Activated CD4-positive, alpha-beta memory T cell treated with anti-CD3 and anti-CD28 coated beads for 36 hours (primary cell): ENCODE measurements at regions of chr4 and their contacts with region 1.

Region 1: GRCh38 chr4:175536852-175537453 is 275.1 kb downstream of the GPM6A start:
- DNase-seq: no peak
- H3K4me3 Mint-ChIP-seq: no peak overlapping the region
- H3K27ac Mint-ChIP-seq: no peak overlapping the region
- H3K4me1 Mint-ChIP-seq: no peaks in the 10 kb centered on the region
- H3K27me3 Mint-ChIP-seq: no peaks in the 10 kb centered on the region

Region 2: DNA sequence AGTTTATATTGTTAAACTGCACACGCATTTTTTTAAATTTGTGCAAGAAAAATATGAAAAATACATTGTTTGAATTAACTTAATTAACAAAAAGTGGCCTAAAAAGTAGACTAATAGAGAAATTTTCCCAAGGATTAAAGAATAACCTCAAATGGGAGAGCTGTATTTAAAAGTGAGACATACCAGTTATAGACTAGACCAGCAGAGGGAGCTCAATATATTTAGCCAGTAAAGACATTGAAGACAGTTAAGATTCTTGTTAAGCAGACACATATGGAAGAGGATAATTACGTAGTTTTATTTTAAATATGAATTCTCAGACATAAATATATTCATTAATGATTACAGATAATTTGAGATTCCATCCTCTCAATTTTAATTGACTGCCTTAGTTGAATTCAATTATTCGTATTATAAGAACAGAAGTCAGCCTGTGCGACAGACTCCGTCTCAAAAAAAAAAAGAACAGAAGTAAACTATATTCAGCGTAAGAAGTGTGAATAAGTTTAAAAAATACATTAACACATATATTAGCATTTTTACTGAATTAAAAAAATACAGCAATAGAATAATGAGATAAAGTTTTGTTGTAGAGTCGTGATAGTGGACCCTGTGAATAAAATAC is 772.7 kb before region 1 on chr4:
- CTCF ChIA-PET with region 1: interaction called, 3 read pairs
- POLR2A ChIA-PET with region 1: no interaction called
- intact Hi-C with region 1: loop called (anchors 2 kb)
- DNase-seq: no peak
- H3K4me3 Mint-ChIP-seq: no peak overlapping the region
- H3K27ac Mint-ChIP-seq: no peak overlapping the region
- H3K4me1 Mint-ChIP-seq: no peaks in the 10 kb centered on the region
- H3K27me3 Mint-ChIP-seq: no peaks in the 10 kb centered on the region